Natural killer cell (primary cell): ENCODE measurements at regions of chr19 and their contacts with region 1.

Region 1: DNA sequence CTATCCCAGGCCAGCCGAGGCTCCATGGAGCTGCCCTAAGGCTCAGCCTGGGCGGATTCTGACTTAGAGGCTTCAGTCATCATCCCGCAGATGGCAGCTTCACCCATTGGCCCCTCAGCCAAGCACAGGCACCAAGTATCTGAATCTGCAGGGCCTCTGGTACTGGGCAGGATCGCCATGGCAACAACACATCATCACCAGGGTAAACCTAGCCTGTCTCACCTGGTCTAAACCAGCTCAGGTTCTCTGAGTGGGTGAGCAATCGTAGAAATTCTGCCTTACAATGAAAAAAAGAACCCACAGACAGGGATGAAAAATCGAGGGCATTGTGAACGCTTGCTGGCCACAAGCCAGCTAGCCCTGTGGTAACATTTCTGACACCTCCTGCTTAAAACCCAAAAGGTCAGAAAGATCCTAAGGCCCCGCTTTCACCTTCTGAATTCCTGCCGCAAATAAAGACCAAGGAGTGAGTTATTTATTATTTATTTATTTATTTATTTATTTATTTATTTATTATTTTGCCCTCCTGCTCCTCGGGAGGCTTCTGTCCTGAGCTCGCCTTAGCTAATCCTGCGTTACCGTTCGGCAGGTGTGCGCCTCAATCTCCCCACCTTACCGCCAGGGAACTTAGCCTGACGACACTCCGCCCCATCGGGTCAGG is 12.0 kb upstream of the CEACAM21 start:
- DNase-seq: peak in 1 of 2 donors; percentile 81
- ATAC-seq: peak; percentile 49 to 77 (median 71)
- H3K4me3 ChIP-seq: peak overlapping the region; percentile 33
- H3K4me3 Mint-ChIP-seq: peak overlapping the region; percentile 78
- H3K27ac ChIP-seq: peak overlapping the region; percentile 40
- H3K27ac Mint-ChIP-seq: peak overlapping the region; percentile 50 to 81
- H3K4me1 ChIP-seq: peaks cover 34% of the 10 kb centered on the region
- H3K4me1 Mint-ChIP-seq: peaks cover 59 to 68% of the 10 kb centered on the region in 2 donors
- H3K27me3 ChIP-seq: no peaks in the 10 kb centered on the region
- H3K27me3 Mint-ChIP-seq: no peaks in the 10 kb centered on the region
- CTCF ChIP-seq: no peak

Region 2: DNA sequence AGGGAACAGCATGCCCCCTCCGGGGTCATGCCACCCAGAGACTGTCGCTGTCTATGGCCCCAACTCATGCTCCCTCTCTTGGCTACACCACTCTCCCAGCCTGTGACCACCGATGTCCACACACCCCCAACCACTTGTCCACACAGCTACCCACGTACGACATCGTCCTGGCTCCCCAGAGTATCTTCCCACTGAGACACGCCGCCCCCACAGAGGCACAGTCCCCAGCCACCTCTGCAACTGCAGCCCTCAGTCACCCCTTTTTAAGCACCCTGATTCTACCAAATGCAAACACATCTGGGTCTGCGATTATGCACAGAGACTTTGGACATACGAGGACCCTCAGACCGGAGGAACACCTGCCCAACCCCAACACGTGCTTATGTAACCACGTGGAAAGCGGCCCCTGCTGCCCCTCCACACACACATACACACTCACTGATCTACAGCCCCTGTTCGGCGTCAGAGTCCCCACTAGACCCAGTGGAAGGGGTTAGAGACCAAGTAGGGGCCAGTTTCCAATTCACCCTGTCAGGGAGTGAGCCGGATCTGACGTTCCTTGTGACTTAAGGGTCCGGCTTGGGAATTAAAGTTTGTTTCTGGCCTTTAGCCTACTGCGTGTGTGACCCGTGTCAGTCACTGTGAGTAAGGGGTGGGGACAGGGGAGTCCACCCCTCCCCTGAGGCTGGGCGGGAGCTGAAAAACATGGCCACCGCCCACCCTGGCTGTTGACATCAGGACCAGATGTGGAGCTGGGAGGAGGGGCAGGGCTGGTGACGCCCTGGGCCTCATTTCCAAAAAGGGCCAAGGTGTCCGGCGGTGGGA is 356.8 kb before region 1 on chr19:
- intact Hi-C with region 1: loop called (anchors 10 kb)
- DNase-seq: no peak
- ATAC-seq: no peak
- H3K4me3 ChIP-seq: no peak overlapping the region
- H3K4me3 Mint-ChIP-seq: no peak overlapping the region
- H3K27ac ChIP-seq: no peak overlapping the region
- H3K27ac Mint-ChIP-seq: no peak overlapping the region
- H3K4me1 ChIP-seq: no peaks in the 10 kb centered on the region
- H3K4me1 Mint-ChIP-seq: peaks cover 4 to 10% of the 10 kb centered on the region in 2 donors
- H3K27me3 ChIP-seq: no peaks in the 10 kb centered on the region
- H3K27me3 Mint-ChIP-seq: no peaks in the 10 kb centered on the region
- CTCF ChIP-seq: no peak

Region 3: DNA sequence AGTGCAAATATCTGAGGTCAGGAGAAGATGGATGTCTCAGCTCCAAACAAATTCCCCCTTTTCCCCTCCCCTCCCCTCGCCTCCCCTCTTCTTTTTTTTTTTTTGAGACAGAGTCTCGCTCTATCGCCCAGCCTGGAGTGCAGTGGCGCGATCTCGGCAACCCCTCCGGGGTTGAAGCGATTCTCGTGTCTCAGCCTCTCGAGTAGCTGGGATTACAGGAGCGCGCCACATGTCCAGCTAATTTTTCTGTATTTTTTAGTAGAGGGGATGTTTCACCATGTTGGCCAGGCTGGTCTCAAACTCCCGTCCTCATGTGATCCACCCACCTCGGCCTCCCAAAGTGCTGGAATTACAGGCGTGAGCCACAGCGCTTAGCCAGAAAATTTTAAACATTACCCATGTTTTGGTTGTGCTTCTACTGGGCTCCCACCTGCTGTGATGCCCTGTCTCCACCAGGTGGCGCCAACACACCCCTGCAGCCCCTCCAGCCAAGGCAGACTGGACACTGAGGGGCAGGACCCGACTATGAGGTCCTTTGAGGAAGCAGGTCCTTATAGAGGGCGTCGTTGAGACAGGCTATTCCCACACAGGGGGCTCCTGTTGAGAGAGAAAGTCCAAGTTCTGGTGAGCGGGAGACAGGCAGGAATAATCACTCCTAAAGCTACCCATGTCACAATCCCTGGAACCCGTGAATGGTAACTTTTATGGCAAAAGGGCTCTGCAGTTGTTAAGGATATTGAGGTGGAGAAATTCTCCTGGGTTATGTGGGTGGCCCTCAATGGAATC is 114.7 kb before region 1 on chr19:
- intact Hi-C with region 1: loop called (anchors 1 kb)
- DNase-seq: peak; percentile 71 to 85
- ATAC-seq: peak; percentile 87 to 96 (median 94)
- H3K4me3 ChIP-seq: no peak overlapping the region
- H3K4me3 Mint-ChIP-seq: peak overlapping the region; percentile 45
- H3K27ac ChIP-seq: no peak overlapping the region
- H3K27ac Mint-ChIP-seq: no peak overlapping the region
- H3K4me1 ChIP-seq: peaks cover 9% of the 10 kb centered on the region
- H3K4me1 Mint-ChIP-seq: peaks cover 0 to 8% of the 10 kb centered on the region in 2 donors
- H3K27me3 ChIP-seq: peaks cover 3% of the 10 kb centered on the region
- H3K27me3 Mint-ChIP-seq: peaks cover 14% of the 10 kb centered on the region in 2 donors
- CTCF ChIP-seq: peak; percentile 92

Region 4: GRCh38 chr19:41521931-41522555 is 41.9 kb before region 1 on chr19:
- intact Hi-C with region 1: loop called (anchors 5 kb)
- DNase-seq: peak; percentile 47 to 76
- ATAC-seq: peak; percentile 72 to 84 (median 79)
- H3K4me3 ChIP-seq: peak overlapping the region; percentile 33
- H3K4me3 Mint-ChIP-seq: peak overlapping the region; percentile 93
- H3K27ac ChIP-seq: peak overlapping the region; percentile 64
- H3K27ac Mint-ChIP-seq: peak overlapping the region; percentile 76 to 92
- H3K4me1 ChIP-seq: peaks cover 3% of the 10 kb centered on the region
- H3K4me1 Mint-ChIP-seq: peaks cover 24 to 28% of the 10 kb centered on the region in 2 donors
- H3K27me3 ChIP-seq: peaks cover 2% of the 10 kb centered on the region
- H3K27me3 Mint-ChIP-seq: peaks cover 29 to 37% of the 10 kb centered on the region in 2 donors
- CTCF ChIP-seq: no peak

Region 5: DNA sequence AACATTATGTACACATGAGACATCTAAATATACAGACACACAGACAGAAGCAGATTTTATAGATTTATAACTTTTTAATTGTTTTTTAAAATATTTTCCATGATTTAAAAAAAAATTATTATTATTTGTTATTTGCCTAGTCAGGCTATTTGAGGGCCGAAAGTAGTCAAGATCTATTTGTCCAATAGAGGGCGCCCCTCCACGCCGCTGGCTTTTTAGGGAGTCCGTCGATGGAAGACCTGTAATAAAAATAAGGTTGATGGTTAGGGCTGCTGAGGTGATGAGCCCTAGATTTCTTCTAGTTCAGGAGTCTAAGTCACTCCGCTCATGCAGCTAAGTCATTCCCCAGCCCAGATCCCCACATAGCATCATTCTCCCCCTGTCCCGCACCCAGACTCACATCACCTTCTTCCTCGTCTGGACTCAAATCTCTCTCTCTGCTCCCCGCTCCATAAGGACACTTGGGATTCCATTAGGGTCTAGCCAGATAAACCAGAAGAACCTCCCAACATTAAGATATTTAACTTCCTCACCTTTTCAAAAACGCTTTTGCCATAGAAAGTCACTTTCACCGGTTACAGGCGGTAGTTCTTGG is 21.9 kb before region 1 on chr19:
- intact Hi-C with region 1: loop called (anchors 1 kb)
- DNase-seq: peak; percentile 74 to 88
- ATAC-seq: peak; percentile 32 to 57 (median 57)
- H3K4me3 ChIP-seq: no peak overlapping the region
- H3K4me3 Mint-ChIP-seq: peak overlapping the region; percentile 65
- H3K27ac ChIP-seq: no peak overlapping the region
- H3K27ac Mint-ChIP-seq: peak overlapping the region in 1 of 2 donors; percentile 1
- H3K4me1 ChIP-seq: peaks cover 33% of the 10 kb centered on the region
- H3K4me1 Mint-ChIP-seq: peaks cover 40 to 41% of the 10 kb centered on the region in 2 donors
- H3K27me3 ChIP-seq: no peaks in the 10 kb centered on the region
- H3K27me3 Mint-ChIP-seq: no peaks in the 10 kb centered on the region
- CTCF ChIP-seq: peak; percentile 92